ENCODE measurements at regions of chr16 and their contacts with region 1.

Region 1: DNA sequence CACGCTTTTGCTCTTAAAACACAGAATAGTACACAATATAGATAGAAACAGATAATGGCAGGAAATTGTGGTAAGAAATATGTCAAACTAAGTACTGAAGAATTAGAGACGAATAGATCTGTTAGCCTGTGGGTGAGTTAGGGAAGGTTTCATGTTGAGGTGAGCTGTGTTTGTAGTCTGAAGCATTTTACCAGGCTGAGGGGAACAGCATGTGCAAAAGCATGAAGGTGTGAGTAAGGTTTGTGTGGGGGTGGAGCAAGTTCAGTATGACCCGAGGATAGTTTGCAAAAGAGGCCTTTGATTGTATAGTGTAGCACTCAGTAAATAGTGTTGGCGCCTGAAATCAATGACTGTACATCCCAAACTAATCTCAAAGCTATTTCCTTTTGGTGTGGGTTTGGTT is 13.8 kb downstream of the IGSF6 start:
- DNase-seq: peak; percentile 57
- ATAC-seq: peak; percentile 92
- H3K4me3 Mint-ChIP-seq: no peak overlapping the region
- H3K27ac Mint-ChIP-seq: peak overlapping the region; percentile 74
- H3K4me1 Mint-ChIP-seq: peaks cover 31% of the 10 kb centered on the region
- H3K27me3 Mint-ChIP-seq: no peaks in the 10 kb centered on the region

Region 2: GRCh38 chr16:21150375-21151001 is 488.1 kb before region 1 on chr16 and contains the start of gene DNAH3:
- CTCF ChIA-PET with region 1: no interaction called
- POLR2A ChIA-PET with region 1: no interaction called
- intact Hi-C with region 1: no loop called
- DNase-seq: no peak
- ATAC-seq: peak; percentile 30
- H3K4me3 Mint-ChIP-seq: no peak within 1 kb of the TSS
- H3K27ac Mint-ChIP-seq: no peak within 1 kb of the TSS
- H3K4me1 Mint-ChIP-seq: no peaks in the 10 kb centered on the region
- H3K27me3 Mint-ChIP-seq: peaks cover 14% of the 10 kb centered on the region
- total RNA-seq, gene DNAH3: not detected

Region 3: DNA sequence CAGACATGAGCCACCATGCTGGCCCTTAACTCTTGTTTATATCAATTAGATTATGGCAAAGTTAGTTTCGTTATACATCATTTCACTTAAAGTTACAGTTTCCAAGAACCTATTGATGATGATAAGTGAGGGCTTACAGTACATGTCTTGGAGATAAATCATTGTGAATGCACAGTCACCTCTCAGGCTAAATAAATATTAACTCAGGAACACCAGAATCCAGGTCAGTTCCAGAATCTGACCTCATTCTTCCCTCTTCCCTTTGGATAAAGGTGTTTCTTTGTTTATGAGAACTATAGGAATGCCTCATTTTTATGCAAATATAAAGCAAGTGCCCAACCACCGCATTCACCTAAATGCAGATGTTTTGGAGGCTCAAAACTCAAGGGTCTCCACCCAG is 312.1 kb before region 1 on chr16:
- CTCF ChIA-PET with region 1: no interaction called
- POLR2A ChIA-PET with region 1: no interaction called
- intact Hi-C with region 1: no loop called
- DNase-seq: no peak
- ATAC-seq: no peak
- H3K4me3 Mint-ChIP-seq: no peak overlapping the region
- H3K27ac Mint-ChIP-seq: no peak overlapping the region
- H3K4me1 Mint-ChIP-seq: no peaks in the 10 kb centered on the region
- H3K27me3 Mint-ChIP-seq: peaks cover 6% of the 10 kb centered on the region

Region 4: DNA sequence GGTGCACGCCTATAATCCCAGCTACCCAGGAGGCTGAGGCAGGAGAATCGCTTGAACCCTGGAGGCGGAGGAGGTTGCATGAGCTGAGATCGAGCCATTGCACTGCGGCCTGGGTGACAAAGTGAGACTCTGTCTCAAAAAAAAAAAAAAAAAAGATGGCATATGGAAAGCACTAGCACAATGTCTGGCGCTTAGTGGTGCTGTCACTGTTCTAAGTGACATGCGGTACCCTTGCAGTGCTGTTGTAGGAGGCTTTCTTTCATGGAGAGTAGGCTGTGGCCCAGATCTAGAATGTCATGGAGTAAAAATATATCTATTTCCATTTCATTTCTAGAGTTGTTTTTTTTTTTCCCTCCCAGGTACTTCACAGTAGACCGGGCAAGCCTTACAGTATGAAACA is 53.8 kb before region 1 on chr16:
- CTCF ChIA-PET with region 1: interaction called, 45 read pairs
- POLR2A ChIA-PET with region 1: no interaction called
- intact Hi-C with region 1: loop called (anchors 1 kb)
- DNase-seq: no peak
- ATAC-seq: no peak
- H3K4me3 Mint-ChIP-seq: no peak overlapping the region
- H3K27ac Mint-ChIP-seq: no peak overlapping the region
- H3K4me1 Mint-ChIP-seq: no peaks in the 10 kb centered on the region
- H3K27me3 Mint-ChIP-seq: no peaks in the 10 kb centered on the region

Region 5: DNA sequence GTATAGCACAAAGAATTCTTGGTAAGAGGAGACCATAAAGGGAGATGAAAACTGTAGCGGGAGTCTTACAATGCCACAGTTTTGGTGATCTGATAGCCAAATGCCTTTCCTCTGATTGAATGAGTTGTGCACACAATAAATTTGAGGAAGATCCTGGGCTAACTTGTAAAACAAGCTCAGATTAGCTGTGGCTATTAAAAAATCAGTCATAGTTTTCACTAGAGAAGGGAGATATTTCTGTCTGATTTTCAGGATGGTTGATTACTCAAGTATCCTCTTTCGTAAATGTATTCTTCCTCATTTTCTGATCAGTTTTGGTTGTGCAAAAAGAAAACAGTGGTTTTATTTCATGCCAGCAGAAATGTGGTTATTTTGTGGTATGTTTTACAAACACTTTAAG is 48.3 kb before region 1 on chr16:
- CTCF ChIA-PET with region 1: interaction called, 11 read pairs
- POLR2A ChIA-PET with region 1: no interaction called
- intact Hi-C with region 1: no loop called
- DNase-seq: no peak
- ATAC-seq: no peak
- H3K4me3 Mint-ChIP-seq: no peak overlapping the region
- H3K27ac Mint-ChIP-seq: no peak overlapping the region
- H3K4me1 Mint-ChIP-seq: no peaks in the 10 kb centered on the region
- H3K27me3 Mint-ChIP-seq: no peaks in the 10 kb centered on the region

Region 6: GRCh38 chr16:21650521-21650920 is 11.9 kb after region 1 on chr16:
- CTCF ChIA-PET with region 1: no interaction called
- POLR2A ChIA-PET with region 1: no interaction called
- intact Hi-C with region 1: no loop called
- DNase-seq: no peak
- ATAC-seq: no peak
- H3K4me3 Mint-ChIP-seq: no peak overlapping the region
- H3K27ac Mint-ChIP-seq: no peak overlapping the region
- H3K4me1 Mint-ChIP-seq: peaks cover 55% of the 10 kb centered on the region
- H3K27me3 Mint-ChIP-seq: no peaks in the 10 kb centered on the region

Region 7: GRCh38 chr16:22797551-22797950 is 1159.0 kb after region 1 on chr16:
- CTCF ChIA-PET with region 1: no interaction called
- POLR2A ChIA-PET with region 1: no interaction called
- intact Hi-C with region 1: no loop called
- DNase-seq: no peak
- ATAC-seq: no peak
- H3K4me3 Mint-ChIP-seq: no peak overlapping the region
- H3K27ac Mint-ChIP-seq: no peak overlapping the region
- H3K4me1 Mint-ChIP-seq: no peaks in the 10 kb centered on the region
- H3K27me3 Mint-ChIP-seq: peaks cover 19% of the 10 kb centered on the region

Measured in activated CD4-positive, alpha-beta T cell treated with anti-CD3 and anti-CD28 coated beads for 36 hours (primary cell).